Activated CD4-positive, alpha-beta memory T cell treated with anti-CD3 and anti-CD28 coated beads for 36 hours (primary cell): ENCODE measurements at regions of chr2 and their contacts with region 1.

Region 1: DNA sequence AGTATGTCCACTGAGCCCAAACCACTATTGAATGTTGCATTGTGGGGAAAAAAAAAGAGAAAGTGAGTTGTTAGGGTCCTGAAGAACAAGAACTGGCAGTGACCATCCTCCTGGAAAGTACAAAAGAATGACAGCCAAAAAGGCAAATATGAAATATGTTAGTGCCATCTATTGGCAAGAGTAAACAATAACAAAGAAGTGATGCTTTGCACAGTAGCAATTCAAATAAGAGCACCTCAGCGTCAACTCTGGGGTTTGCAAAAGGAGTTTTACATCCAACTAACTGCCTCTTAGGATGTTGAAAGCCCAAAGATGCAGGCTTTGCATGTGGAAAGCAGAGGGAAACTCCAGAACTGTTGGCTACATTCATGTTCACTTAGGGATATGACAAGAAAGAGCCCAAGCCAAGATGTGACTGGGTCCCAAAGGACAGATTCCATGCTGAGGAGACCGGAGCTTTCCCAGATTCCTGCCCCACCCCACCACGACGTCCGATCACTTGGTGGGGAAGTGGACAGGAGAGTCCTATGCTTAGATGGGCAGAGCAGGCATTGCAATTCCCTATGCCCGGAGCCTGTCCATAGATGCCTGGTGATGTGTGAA is 15.6 kb downstream of the TRABD2A start:
- DNase-seq: no peak
- H3K4me3 Mint-ChIP-seq: no peak overlapping the region
- H3K27ac Mint-ChIP-seq: peak overlapping the region; percentile 18
- H3K4me1 Mint-ChIP-seq: peaks cover 73% of the 10 kb centered on the region
- H3K27me3 Mint-ChIP-seq: no peaks in the 10 kb centered on the region

Region 2: GRCh38 chr2:84495539-84496146 is 369.6 kb before region 1 on chr2:
- CTCF ChIA-PET with region 1: interaction called, 4 read pairs
- POLR2A ChIA-PET with region 1: no interaction called
- intact Hi-C with region 1: loop called (anchors 1 kb)
- DNase-seq: no peak
- H3K4me3 Mint-ChIP-seq: no peak overlapping the region
- H3K27ac Mint-ChIP-seq: no peak overlapping the region
- H3K4me1 Mint-ChIP-seq: peaks cover 17% of the 10 kb centered on the region
- H3K27me3 Mint-ChIP-seq: no peaks in the 10 kb centered on the region

Region 3: DNA sequence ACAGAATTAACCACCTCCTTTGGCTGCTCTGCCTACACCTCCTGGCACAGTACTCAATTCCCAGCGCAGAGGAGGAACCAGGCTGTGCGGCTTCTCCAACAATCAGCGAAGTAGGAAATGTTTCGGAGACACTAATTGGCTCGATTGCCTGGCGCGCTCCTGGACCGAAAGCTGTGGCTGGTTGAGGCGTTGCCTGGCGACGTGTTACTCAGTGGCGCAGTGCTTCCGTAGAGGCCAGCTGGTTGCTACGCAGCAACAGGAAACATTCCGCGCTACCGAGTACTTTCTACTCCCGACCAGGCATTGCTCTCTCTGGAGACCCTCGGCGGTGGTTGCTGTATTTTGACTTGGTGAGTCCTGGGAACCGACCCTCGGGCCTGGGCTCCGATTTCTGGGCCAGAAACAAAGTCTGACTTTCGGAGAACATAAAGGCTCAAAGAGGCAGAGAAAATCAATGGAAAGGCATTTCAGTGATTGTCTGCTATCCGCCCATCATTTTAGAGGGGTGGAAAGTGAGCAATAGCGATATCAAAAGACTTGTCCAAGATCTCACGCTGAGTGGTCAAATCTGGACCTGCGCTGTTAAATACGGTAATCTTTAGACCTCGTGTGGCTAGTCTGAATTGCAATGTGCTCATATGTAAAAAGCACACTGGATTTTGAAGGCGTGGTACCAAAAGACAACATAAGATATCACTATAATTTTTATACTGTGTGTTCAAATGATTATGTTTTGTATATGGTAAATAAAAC is 348.9 kb before region 1 on chr2 and contains the start of gene DNAH6:
- CTCF ChIA-PET with region 1: no interaction called
- POLR2A ChIA-PET with region 1: no interaction called
- intact Hi-C with region 1: loop called (anchors 5 kb)
- DNase-seq: peak; percentile 92
- H3K4me3 Mint-ChIP-seq: peak within 1 kb of the TSS; percentile 84
- H3K27ac Mint-ChIP-seq: no peak within 1 kb of the TSS
- H3K4me1 Mint-ChIP-seq: peaks cover 23% of the 10 kb centered on the region
- H3K27me3 Mint-ChIP-seq: no peaks in the 10 kb centered on the region
- total RNA-seq, gene DNAH6: 0.33 to 0.85 TPM

Region 4: GRCh38 chr2:84631047-84631446 is 234.2 kb before region 1 on chr2:
- CTCF ChIA-PET with region 1: no interaction called
- POLR2A ChIA-PET with region 1: no interaction called
- intact Hi-C with region 1: loop called (anchors 5 kb)
- DNase-seq: no peak
- H3K4me3 Mint-ChIP-seq: no peak overlapping the region
- H3K27ac Mint-ChIP-seq: no peak overlapping the region
- H3K4me1 Mint-ChIP-seq: peaks cover 13% of the 10 kb centered on the region
- H3K27me3 Mint-ChIP-seq: no peaks in the 10 kb centered on the region

Region 5: DNA sequence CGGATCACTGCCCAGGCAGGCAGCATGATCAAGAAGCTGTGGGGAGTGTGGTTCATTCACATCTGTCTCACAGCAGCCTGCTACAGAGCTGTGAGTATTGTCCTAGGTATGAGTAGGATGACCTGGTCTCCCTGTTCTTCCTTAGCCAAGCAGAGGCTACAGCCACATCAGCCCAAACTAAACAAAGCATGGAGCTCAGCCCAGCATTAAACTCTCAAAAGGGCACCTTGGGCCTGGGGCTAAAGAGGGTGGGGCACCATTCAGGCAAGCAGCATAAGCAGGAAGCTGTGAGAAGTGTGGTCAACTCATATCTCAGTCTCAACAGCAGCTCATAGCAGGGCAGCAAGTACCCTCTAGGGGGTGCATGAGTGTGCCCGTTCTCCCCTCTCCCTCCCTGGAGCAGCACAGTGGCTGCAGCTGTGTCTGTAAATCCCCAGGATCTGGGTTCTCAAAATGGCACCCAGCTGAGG is 124.0 kb before region 1 on chr2:
- CTCF ChIA-PET with region 1: interaction called, 11 read pairs
- POLR2A ChIA-PET with region 1: no interaction called
- intact Hi-C with region 1: loop called (anchors 1 kb)
- DNase-seq: peak; percentile 75
- H3K4me3 Mint-ChIP-seq: no peak overlapping the region
- H3K27ac Mint-ChIP-seq: no peak overlapping the region
- H3K4me1 Mint-ChIP-seq: peaks cover 10% of the 10 kb centered on the region
- H3K27me3 Mint-ChIP-seq: no peaks in the 10 kb centered on the region

Region 6: GRCh38 chr2:84939426-84940087 is 74.3 kb after region 1 on chr2:
- CTCF ChIA-PET with region 1: no interaction called
- POLR2A ChIA-PET with region 1: no interaction called
- intact Hi-C with region 1: no loop called
- DNase-seq: peak; percentile 87
- H3K4me3 Mint-ChIP-seq: peak overlapping the region; percentile 62
- H3K27ac Mint-ChIP-seq: peak overlapping the region; percentile 93
- H3K4me1 Mint-ChIP-seq: peaks cover 66% of the 10 kb centered on the region
- H3K27me3 Mint-ChIP-seq: no peaks in the 10 kb centered on the region

Region 7: GRCh38 chr2:85066874-85067351 is 201.6 kb after region 1 on chr2:
- CTCF ChIA-PET with region 1: no interaction called
- POLR2A ChIA-PET with region 1: no interaction called
- intact Hi-C with region 1: no loop called
- DNase-seq: peak; percentile 66
- H3K4me3 Mint-ChIP-seq: no peak overlapping the region
- H3K27ac Mint-ChIP-seq: no peak overlapping the region
- H3K4me1 Mint-ChIP-seq: peaks cover 4% of the 10 kb centered on the region
- H3K27me3 Mint-ChIP-seq: peaks cover 19% of the 10 kb centered on the region